Lower leg skin (tissue), 4 donors: ENCODE measurements at regions of chr2 and their contacts with region 1.

Region 1: DNA sequence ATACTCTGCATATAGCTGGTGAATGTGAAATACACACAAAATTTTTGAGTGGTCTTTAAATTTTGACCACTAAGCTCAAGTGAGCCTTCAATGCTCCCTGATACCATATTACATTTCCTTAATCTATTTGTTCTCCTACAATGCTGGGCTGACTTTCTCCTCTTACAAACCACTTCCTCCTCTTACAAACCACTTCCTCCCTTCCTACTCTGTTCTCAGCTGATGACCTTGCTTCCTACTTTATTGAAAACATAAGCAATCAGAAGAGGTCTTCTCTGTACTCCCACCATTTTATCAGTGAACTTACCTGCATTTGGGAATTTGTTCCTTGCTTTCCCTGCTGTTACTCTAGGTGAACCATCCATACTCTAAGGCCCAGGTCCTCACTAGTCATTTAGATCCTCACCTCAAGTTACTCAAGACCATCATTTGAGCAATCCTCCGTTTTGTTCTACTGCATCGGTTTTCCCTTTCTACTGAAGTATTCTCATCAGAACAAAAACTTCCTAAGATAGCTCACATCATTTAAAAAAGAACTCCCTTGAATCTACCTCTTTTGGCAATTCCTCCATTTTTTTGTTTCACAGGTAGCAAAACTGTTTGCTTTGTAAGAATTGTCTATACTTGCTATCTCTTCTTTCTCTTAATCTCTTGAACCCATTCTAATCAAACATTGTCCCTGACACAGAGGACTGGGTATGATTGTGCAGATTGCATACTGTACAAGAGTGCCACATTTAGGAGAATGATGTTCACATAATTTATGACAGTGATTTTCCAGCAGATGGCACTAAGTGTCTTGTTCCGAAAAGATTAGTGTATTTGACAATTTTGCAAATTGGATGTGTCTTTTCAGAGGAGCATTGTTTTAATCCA is 96.5 kb downstream of the EPB41L5 start:
- DNase-seq: no peak
- H3K4me3 ChIP-seq: no peak overlapping the region
- CTCF ChIP-seq: no peak
- POLR2A ChIP-seq: no peak

Region 2: GRCh38 chr2:120312861-120313694 is 203.7 kb after region 1 on chr2:
- intact Hi-C with region 1: loop called (anchors 10 kb)
- DNase-seq: peak; percentile 79 to 95
- H3K4me3 ChIP-seq: no peak overlapping the region
- CTCF ChIP-seq: no peak
- POLR2A ChIP-seq: no peak